ENCODE measurements at regions of chr12 and their contacts with region 1.

Region 1: DNA sequence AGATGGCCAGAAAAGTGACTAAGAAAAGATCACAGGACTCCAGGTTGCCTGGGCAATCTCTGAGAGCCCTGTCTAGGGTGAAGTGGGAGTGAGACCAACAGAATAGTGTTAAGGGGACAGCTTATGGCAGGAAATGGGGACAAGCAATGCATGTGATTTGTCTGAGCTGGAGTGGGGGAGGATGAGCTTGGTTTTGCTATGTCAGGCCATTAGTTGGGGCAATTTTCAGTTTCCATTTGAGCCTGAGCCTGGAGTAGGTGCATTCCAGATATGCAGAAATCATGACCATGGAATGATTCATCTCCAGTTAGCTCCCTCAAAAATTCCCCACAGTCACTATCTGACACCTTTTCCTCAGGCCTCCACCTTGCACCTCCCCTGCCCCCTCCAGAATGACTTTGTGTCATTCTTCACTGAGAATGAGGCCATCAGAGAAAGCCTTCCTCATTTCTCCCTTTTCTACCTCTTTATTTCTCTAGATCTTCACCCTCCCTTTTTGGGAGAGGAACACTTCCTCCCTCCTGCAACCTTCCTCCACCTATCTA is 150.9 kb upstream of the PLEKHG7 start:
- DNase-seq: peak; percentile 48
- H3K4me3 Mint-ChIP-seq: no peak overlapping the region
- H3K27ac Mint-ChIP-seq: no peak overlapping the region
- H3K4me1 Mint-ChIP-seq: peaks cover 33% of the 10 kb centered on the region
- H3K27me3 Mint-ChIP-seq: no peaks in the 10 kb centered on the region
- CTCF ChIP-seq: no peak

Region 2: DNA sequence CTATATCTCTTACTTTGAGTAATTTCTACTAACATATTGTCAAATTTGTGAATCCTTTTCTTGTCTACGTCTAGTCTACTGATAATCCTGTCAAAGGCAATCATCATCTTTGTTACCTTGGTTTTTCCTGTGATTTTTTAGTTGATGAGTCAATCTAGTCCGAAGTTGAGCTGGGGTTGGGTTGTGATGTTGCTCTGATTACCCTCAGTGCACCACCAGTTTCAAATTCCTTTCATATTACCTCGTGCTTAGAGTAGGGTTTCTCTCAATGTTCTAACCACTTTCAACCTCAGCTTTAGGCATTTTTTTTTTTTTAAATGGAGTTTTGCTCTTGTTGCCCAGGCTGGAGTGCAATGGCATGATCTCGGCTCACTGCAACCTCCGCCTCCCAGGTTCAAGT is 593.1 kb before region 1 on chr12:
- CTCF ChIA-PET with region 1: no interaction called
- intact Hi-C with region 1: loop called (anchors 10 kb)
- DNase-seq: no peak
- H3K4me3 Mint-ChIP-seq: no peak overlapping the region
- H3K27ac Mint-ChIP-seq: no peak overlapping the region
- H3K4me1 Mint-ChIP-seq: peaks cover 12% of the 10 kb centered on the region
- H3K27me3 Mint-ChIP-seq: no peaks in the 10 kb centered on the region
- CTCF ChIP-seq: no peak

Region 3: DNA sequence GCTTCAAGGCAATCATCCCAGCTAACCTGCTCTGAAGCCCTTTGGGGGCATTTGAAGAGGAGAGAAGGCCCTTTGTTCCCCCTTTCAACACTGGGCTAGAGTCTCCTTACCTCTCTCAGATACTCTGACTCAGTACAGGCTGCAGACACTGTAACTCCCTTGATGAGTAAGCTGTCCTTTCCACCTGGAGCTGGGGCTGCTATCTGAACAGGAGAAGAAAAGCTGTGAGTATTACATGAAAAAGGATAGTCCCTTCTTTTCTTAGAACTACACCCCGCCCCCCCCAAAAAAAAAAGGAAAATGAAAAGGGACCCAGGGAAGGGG is 35.7 kb before region 1 on chr12:
- CTCF ChIA-PET with region 1: interaction called, 17 read pairs
- intact Hi-C with region 1: no loop called
- DNase-seq: peak; percentile 21
- H3K4me3 Mint-ChIP-seq: no peak overlapping the region
- H3K27ac Mint-ChIP-seq: no peak overlapping the region
- H3K4me1 Mint-ChIP-seq: peaks cover 27% of the 10 kb centered on the region
- H3K27me3 Mint-ChIP-seq: no peaks in the 10 kb centered on the region
- CTCF ChIP-seq: no peak

Region 4: GRCh38 chr12:92735131-92735721 is 183.3 kb after region 1 on chr12:
- CTCF ChIA-PET with region 1: no interaction called
- intact Hi-C with region 1: no loop called
- DNase-seq: peak; percentile 56
- H3K4me3 Mint-ChIP-seq: no peak overlapping the region
- H3K27ac Mint-ChIP-seq: peak overlapping the region; percentile 9
- H3K4me1 Mint-ChIP-seq: peaks cover 6% of the 10 kb centered on the region
- H3K27me3 Mint-ChIP-seq: no peaks in the 10 kb centered on the region
- CTCF ChIP-seq: no peak

Measured in Calu3 (cell line).